SK-N-SH (cell line): ENCODE measurements at regions of chr6 and their contacts with region 1.

Region 1: DNA sequence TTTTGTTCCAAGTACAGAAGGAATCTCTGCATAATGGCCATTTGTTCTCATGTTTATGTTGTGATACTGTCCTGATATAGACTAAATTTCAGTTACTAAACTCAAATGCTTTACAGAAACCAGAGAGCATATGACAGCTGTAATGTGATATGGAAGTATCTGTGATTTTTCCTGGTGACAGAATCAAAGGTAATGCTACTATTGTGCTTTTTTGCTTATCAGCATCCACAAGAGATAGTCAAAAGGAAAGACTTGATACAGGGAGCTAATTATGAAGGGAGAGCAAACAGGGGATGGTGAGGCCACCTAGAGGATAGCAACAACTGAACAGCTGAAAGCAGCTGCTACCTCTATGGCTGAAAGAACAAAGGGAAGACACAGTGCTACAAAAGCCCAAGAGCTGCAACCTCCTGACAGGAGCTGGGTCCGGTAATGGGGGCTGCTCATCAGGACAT is 181.4 kb downstream of the PHF3 start:
- DNase-seq: peak; percentile 68
- H3K4me3 ChIP-seq: no peak overlapping the region; a peak in 1 of 4 replicates
- H3K27ac ChIP-seq: peak overlapping the region in 1 of 2 experiments; percentile 94; a peak in 2 of 4 replicates
- H3K4me1 ChIP-seq: peaks cover 0 to 19% of the 10 kb centered on the region in 2 experiments; a peak in 2 of 4 replicates
- H3K27me3 ChIP-seq: no peaks in the 10 kb centered on the region
- CTCF ChIP-seq: peak; percentile 44
- EP300 ChIP-seq: peak in 1 of 2 experiments; percentile 93; a peak in 2 of 4 replicates
- RAD21 ChIP-seq: peak; percentile 73

Region 2: DNA sequence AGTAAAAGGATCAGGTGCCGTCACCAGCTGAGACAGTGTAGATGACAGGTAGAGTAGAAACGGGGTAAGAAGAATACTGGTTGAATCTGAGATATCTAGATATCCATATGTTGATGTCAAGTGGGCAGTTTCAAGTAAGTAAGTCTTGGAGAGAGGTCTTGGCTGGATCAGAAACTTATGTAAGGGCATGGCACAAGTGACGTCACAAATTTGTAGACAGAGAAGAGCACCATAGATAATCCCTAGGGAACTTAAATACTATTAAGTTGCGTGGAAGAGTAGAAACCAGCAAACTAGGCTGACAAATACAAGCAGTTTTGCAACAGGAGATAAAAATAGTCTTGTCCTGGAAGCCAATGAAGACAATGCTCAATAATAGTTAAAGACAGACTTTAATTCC is 1654.1 kb before region 1 on chr6:
- CTCF ChIA-PET with region 1: no interaction called
- POLR2A ChIA-PET with region 1: no interaction called
- DNase-seq: no peak
- H3K4me3 ChIP-seq: no peak overlapping the region
- H3K27ac ChIP-seq: no peak overlapping the region
- H3K4me1 ChIP-seq: no peaks in the 10 kb centered on the region
- H3K27me3 ChIP-seq: no peaks in the 10 kb centered on the region
- CTCF ChIP-seq: no peak
- EP300 ChIP-seq: no peak
- RAD21 ChIP-seq: no peak

Region 3: DNA sequence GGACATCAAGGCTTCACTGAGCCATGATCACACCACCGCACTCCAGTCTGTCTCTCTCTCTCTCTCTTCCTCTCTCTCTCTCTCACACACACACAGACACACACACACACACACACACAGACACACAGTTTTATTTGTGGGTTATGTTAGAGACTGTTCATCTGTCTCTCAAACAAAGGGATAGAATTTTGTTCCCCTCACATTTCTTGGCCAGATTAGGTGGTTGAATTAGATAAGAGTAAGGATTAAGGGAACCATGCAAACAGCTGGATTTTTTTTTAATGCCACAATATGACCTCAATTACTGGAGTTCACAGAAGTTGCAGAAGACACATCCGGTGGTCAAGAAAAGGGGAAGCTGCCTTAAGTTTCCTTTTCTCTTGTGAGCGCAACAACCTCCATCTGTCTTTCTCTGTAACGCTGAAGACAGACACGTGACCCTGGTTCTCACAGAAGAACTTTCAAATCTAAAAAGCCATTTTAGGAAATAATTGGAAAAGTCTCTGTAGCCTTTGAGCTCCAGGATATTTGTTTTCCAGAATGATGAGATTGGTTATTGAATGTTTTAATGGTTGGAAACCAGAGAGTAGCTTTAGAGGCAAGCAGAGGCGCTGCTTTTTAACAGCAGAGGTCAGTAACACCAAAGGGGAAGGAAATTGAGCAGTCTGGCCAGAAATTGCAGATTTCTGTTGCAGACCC is 464.3 kb before region 1 on chr6:
- CTCF ChIA-PET with region 1: interaction called, 11 read pairs
- POLR2A ChIA-PET with region 1: no interaction called
- DNase-seq: peak; percentile 5
- H3K4me3 ChIP-seq: no peak overlapping the region
- H3K27ac ChIP-seq: no peak overlapping the region
- H3K4me1 ChIP-seq: peaks cover 0 to 12% of the 10 kb centered on the region in 2 experiments; a peak in 1 of 4 replicates
- H3K27me3 ChIP-seq: no peaks in the 10 kb centered on the region
- CTCF ChIP-seq: peak; percentile 70
- EP300 ChIP-seq: no peak
- RAD21 ChIP-seq: peak; percentile 81